CD14-positive monocyte (primary cell): ENCODE measurements at regions of chr13 and their contacts with region 1.

Region 1: GRCh38 chr13:30617315-30618185 is at the start of gene USPL1:
- DNase-seq: peak; percentile 97 to 99 (median 99)
- H3K4me3 ChIP-seq: peak within 1 kb of the TSS; percentile 95 to 100 (median 98)
- H3K4me3 Mint-ChIP-seq: no peak within 1 kb of the TSS
- H3K27ac ChIP-seq: peak within 1 kb of the TSS; percentile 100
- H3K27ac Mint-ChIP-seq: no peak within 1 kb of the TSS
- H3K4me1 ChIP-seq: peaks cover 28 to 34% of the 10 kb centered on the region in 2 donors
- H3K4me1 Mint-ChIP-seq: peaks cover 5% of the 10 kb centered on the region
- H3K27me3 ChIP-seq: no peaks in the 10 kb centered on the region
- H3K27me3 Mint-ChIP-seq: no peaks in the 10 kb centered on the region
- CTCF ChIP-seq: peak; percentile 19
- polyA plus RNA-seq, gene USPL1: 3.9 to 20.5 (median 5.5) TPM

Region 2: DNA sequence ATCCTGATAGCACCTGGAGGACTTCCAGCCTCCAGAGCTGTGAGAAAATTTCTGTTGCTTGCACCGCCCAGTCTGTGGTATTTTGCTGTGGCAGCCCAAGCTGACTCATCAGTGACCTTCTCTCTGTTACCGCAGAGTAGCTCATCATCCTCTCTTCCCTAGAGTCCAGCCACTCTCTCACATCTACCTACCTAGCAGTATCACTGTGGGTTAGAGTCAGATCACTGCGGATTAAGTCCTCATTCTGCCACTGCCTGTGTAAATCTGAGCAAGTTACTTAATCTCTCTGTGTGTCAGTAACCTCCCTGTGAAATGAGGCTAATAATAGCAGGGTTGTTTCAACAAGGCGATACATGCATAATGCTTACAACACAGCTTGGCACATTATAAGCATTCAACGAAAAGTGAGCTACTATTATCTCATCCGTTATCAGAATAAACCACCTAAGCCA is 40.1 kb before region 1 on chr13:
- intact Hi-C with region 1: loop called (anchors 5 kb)
- DNase-seq: peak; percentile 56 to 79 (median 74)
- H3K4me3 ChIP-seq: no peak overlapping the region
- H3K4me3 Mint-ChIP-seq: no peak overlapping the region
- H3K27ac ChIP-seq: no peak overlapping the region
- H3K27ac Mint-ChIP-seq: peak overlapping the region in 3 of 7 donors; percentile 10 to 48 (median 35)
- H3K4me1 ChIP-seq: peaks cover 13 to 20% of the 10 kb centered on the region in 2 donors
- H3K4me1 Mint-ChIP-seq: peaks cover 23% of the 10 kb centered on the region
- H3K27me3 ChIP-seq: peaks cover 0 to 2% of the 10 kb centered on the region in 2 donors
- H3K27me3 Mint-ChIP-seq: peaks cover 1 to 7% (median 2%) of the 10 kb centered on the region in 3 donors
- CTCF ChIP-seq: no peak

Region 3: DNA sequence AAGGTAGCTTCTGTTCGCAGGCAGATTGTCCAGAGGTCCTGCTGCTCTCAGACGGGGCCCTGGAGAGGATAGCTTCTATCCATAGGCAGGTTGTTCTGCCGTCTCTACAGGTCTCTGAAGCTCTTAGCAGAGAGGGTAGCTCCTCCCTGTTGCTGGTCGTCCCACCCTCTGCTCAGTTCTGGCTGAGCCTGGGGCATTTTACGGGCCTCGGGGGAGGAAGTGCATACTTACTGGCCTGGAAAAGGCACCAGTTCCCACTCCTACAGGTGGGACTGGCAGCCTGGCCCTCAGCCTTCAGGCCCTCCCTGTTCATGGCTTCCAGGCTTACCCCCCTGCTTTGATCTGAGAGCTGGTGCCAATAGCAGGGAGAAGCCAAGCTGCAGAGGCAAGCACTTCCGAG is 42.4 kb after region 1 on chr13:
- intact Hi-C with region 1: loop called (anchors 5 kb)
- DNase-seq: no peak
- H3K4me3 ChIP-seq: peak overlapping the region in 1 of 3 experiments; percentile 25
- H3K4me3 Mint-ChIP-seq: peak overlapping the region in 1 of 2 donors; percentile 72
- H3K27ac ChIP-seq: peak overlapping the region; percentile 21 to 60
- H3K27ac Mint-ChIP-seq: peak overlapping the region in 4 of 7 donors; percentile 59 to 94 (median 72)
- H3K4me1 ChIP-seq: peaks cover 38 to 51% of the 10 kb centered on the region in 2 donors
- H3K4me1 Mint-ChIP-seq: peaks cover 23% of the 10 kb centered on the region
- H3K27me3 ChIP-seq: no peaks in the 10 kb centered on the region
- H3K27me3 Mint-ChIP-seq: no peaks in the 10 kb centered on the region
- CTCF ChIP-seq: no peak

Region 4: DNA sequence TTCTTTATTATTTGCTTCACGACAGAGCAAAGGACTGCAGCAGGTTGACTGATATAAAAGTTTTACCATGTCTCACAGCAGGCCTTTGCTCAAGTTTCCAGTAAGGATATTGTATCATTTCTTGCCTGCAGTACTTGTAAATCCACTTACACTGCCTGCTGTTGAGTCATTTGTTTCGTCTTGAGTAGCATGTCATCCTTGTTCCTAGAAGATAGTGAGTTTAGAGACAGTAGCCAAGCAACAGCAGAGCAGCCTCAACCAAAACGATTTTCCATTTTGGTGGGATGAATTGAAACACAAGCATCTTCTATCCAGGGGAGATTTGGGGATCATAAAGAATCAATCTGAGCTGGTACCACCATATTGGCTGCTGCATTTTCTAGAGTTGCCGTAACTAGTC is 93.8 kb after region 1 on chr13:
- intact Hi-C with region 1: no loop called
- DNase-seq: peak; percentile 61 to 69 (median 68)
- H3K4me3 ChIP-seq: no peak overlapping the region
- H3K4me3 Mint-ChIP-seq: peak overlapping the region in 1 of 2 donors; percentile 71
- H3K27ac ChIP-seq: peak overlapping the region in 1 of 2 donors; percentile 7
- H3K27ac Mint-ChIP-seq: peak overlapping the region; percentile 18 to 82 (median 71)
- H3K4me1 ChIP-seq: peaks cover 51 to 52% of the 10 kb centered on the region in 2 donors
- H3K4me1 Mint-ChIP-seq: peaks cover 55% of the 10 kb centered on the region
- H3K27me3 ChIP-seq: peaks cover 3 to 10% of the 10 kb centered on the region in 2 donors
- H3K27me3 Mint-ChIP-seq: peaks cover 11 to 14% (median 12%) of the 10 kb centered on the region in 3 donors
- CTCF ChIP-seq: no peak